Panc1 (cell line): ENCODE measurements at regions of chr2 and their contacts with region 1.

Region 1: DNA sequence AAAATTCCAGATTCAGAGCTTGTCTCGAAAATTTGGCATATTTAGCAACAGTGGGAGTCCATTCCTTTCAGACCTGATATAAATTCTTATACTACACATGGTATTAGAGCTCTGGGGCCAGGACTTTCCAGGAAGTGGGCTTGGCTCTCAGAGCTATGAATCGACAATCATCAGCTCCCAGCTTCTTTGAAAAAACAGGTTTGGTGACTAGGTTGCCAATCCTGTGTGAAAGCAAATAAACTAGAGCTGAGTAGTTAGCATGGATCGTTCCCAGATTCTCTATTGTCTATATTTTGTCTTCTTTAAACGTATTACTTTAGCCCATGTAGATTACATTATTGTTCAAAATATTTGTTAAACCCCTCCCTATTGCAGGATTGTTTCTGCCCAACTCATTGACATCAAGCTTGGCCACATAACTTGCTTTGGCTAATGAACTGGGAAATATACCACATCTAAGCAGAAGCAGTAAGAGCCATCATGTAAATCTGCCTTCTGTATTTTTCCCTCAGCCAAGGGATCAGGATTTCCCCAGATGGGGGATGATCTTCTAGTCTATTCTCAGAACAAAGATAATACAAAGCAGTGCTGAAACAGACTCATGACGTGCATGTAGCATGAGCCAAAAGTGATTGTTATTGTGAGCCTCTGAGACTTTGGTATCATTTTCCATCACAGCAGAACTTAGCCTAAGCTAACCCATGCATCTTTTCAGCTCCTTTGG is 105.4 kb downstream of the KCNH7 start:
- DNase-seq: no peak
- ATAC-seq: no peak
- H3K4me3 ChIP-seq: no peak overlapping the region
- H3K27ac ChIP-seq: no peak overlapping the region
- H3K4me1 ChIP-seq: no peaks in the 10 kb centered on the region; the same call in 1 of the 2 replicates
- H3K27me3 ChIP-seq: no peaks in the 10 kb centered on the region
- CTCF ChIP-seq: no peak

Region 2: GRCh38 chr2:162333968-162334367 is 399.2 kb before region 1 on chr2:
- CTCF ChIA-PET with region 1: no interaction called
- POLR2A ChIA-PET with region 1: interaction called, 11 read pairs
- in situ Hi-C with region 1: no loop called
- intact Hi-C with region 1: no loop called
- DNase-seq: no peak
- ATAC-seq: no peak
- H3K4me3 ChIP-seq: no peak overlapping the region
- H3K27ac ChIP-seq: no peak overlapping the region
- H3K4me1 ChIP-seq: no peaks in the 10 kb centered on the region
- H3K27me3 ChIP-seq: no peaks in the 10 kb centered on the region
- CTCF ChIP-seq: peak; percentile 63

Region 3: GRCh38 chr2:162537651-162538050 is 195.5 kb before region 1 on chr2:
- CTCF ChIA-PET with region 1: no interaction called
- POLR2A ChIA-PET with region 1: no interaction called
- in situ Hi-C with region 1: no loop called
- intact Hi-C with region 1: no loop called
- DNase-seq: no peak
- ATAC-seq: no peak
- H3K4me3 ChIP-seq: no peak overlapping the region
- H3K27ac ChIP-seq: no peak overlapping the region
- H3K4me1 ChIP-seq: no peaks in the 10 kb centered on the region
- H3K27me3 ChIP-seq: no peaks in the 10 kb centered on the region
- CTCF ChIP-seq: no peak

Region 4: DNA sequence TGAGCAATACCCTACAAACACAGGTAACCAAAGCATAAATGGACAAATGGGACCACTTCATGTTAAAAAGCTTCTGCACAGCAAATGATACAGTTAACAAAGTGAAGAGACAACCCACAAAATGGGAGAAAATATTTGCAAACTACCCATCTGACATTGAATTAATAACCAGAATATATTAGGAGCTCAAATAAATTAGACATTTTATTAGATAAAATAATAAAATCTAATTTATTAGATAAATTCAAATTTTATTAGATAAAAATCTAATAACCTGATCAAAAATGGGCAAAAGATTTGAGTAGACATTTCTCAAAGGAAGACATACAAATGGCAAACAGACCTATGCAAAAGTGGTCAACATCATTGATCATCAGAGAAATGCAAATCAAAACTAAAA is 141.3 kb after region 1 on chr2:
- CTCF ChIA-PET with region 1: no interaction called
- POLR2A ChIA-PET with region 1: no interaction called
- in situ Hi-C with region 1: no loop called
- intact Hi-C with region 1: no loop called
- DNase-seq: no peak
- ATAC-seq: no peak
- H3K4me3 ChIP-seq: no peak overlapping the region
- H3K27ac ChIP-seq: no peak overlapping the region
- H3K4me1 ChIP-seq: no peaks in the 10 kb centered on the region
- H3K27me3 ChIP-seq: no peaks in the 10 kb centered on the region
- CTCF ChIP-seq: no peak